IMR-90 (cell line): ENCODE measurements at regions of chr9 and their contacts with region 1.

Region 1: DNA sequence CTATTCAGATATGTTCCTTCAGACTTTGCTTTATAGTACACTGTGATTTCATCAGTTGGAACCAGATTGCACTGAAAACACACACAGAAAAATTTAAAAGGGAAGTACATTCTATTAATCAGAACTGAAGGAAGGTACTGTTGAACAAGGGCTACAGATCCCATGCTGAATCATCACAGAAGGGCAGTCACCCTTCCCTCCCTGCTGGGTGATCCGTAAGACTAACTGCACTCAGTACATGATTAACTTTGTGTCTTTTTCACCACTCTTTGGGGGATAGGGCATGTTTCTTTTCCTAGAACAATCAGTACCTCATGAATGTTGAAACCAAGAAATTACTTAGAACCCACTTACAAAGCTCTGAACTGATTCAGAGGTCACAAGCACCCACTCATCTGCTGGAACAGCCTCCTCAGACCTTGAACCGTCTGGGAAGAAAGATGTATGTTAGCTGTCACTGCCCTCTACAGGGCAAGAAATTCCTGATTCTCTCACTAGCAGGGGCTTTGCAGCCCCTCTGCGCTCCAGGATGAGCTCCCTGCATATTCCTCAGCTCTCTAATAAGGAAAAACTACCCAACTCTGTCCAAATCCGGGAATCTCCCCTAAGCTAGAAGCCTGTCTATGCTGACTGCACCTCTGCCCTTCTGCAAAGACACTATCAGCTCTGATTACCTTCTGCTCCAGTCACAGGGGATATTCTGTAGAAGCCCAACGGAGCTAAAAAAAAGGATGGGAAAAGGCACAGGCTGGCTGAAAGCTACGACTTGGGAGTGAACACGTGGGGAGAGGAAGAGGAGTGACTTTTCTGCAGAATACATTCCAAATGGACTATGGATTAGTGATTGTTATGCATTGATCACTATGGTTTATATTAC is 51.0 kb downstream of the IARS1 start:
- DNase-seq: peak; percentile 87
- ATAC-seq: peak; percentile 45
- H3K4me3 ChIP-seq: no peak overlapping the region
- H3K27ac ChIP-seq: peak overlapping the region; percentile 99
- H3K4me1 ChIP-seq: peaks cover 36% of the 10 kb centered on the region
- H3K27me3 ChIP-seq: no peaks in the 10 kb centered on the region
- CTCF ChIP-seq: peak; percentile 56
- POLR2A ChIP-seq: peak; percentile 31; the same call in 1 of the 2 replicates
- RAD21 ChIP-seq: peak; percentile 56

Region 2: DNA sequence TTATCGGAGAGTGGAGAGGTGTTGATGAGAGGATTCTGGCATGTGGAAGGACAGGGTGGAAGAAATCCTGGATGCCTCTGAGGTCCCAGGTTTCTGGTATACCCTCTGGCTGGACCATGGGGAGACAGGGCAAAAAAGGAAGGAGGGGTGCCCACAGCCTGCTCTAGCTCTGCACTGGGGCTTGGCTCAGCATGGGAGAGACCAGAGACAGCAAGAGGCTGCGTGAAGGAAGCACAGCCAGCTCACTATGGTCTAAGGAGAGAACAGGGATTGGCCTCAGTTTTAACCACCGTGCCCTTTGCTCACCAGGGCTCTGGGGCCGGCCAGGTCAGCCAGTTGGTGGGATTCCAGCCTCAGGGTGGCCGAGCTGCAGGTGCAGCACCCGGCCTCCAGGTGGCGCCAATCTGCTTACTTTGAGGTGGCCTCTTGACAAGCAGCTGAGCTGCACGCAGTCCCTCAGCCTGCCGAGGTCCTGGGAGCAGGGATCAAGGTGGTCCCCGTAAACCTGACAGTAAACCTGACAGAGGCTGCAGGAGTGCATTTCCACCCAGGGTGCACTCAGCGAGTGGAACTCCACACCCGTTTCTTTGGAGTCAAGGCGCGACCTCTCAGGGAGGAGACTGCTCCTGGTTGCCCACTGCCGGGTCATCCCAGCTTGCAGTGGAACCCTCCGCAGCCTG is 102.3 kb before region 1 on chr9:
- CTCF ChIA-PET with region 1: interaction called, 74 read pairs
- POLR2A ChIA-PET with region 1: interaction called, 4 read pairs
- dilution Hi-C with region 1: no loop called
- in situ Hi-C with region 1: loop called (anchors 5 kb)
- intact Hi-C with region 1: loop called (anchors 1 kb)
- DNase-seq: peak; percentile 65
- ATAC-seq: peak; percentile 55
- H3K4me3 ChIP-seq: peak overlapping the region; percentile 65
- H3K27ac ChIP-seq: peak overlapping the region; percentile 92
- H3K4me1 ChIP-seq: peaks cover 35% of the 10 kb centered on the region
- H3K27me3 ChIP-seq: no peaks in the 10 kb centered on the region
- CTCF ChIP-seq: peak; percentile 92
- POLR2A ChIP-seq: no peak
- RAD21 ChIP-seq: peak; percentile 86

Region 3: DNA sequence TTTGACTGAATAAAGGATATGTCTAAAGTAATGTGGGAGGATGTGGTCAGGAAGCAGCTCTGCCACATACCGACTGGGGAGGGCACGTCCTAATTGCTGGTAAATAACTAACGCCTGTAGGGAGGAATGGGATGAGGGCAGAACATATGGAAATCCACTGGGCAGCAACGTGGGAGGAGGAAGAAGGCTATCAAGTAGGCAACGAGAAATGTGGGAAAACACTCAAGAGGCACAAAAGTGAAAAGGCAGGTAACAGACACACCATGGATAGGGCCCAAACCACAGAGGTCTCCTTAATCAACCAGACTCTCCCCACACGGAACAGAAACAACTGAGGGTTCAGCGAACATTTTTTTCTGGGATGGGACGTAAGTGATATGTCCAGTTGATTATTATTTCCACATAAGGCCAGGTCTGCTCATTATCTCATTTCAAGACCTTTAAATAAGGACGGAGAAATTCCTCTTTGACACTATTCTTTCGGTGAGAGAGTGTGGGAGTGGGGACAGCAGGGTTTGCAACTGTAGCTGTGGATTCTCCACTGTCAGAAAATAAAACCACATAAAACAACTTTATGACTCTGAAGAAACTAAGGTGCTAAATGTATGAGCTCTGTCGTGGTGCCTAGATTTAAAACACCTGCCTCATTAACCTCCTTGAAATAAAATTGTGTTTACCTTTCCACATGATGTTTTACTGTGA is 34.0 kb after region 1 on chr9:
- CTCF ChIA-PET with region 1: interaction called, 3 read pairs
- POLR2A ChIA-PET with region 1: no interaction called
- dilution Hi-C with region 1: no loop called
- in situ Hi-C with region 1: no loop called
- intact Hi-C with region 1: loop called (anchors 5 kb)
- DNase-seq: no peak
- ATAC-seq: no peak
- H3K4me3 ChIP-seq: no peak overlapping the region
- H3K27ac ChIP-seq: no peak overlapping the region
- H3K4me1 ChIP-seq: peaks cover 2% of the 10 kb centered on the region
- H3K27me3 ChIP-seq: no peaks in the 10 kb centered on the region
- CTCF ChIP-seq: no peak
- POLR2A ChIP-seq: no peak
- RAD21 ChIP-seq: no peak

Region 4: DNA sequence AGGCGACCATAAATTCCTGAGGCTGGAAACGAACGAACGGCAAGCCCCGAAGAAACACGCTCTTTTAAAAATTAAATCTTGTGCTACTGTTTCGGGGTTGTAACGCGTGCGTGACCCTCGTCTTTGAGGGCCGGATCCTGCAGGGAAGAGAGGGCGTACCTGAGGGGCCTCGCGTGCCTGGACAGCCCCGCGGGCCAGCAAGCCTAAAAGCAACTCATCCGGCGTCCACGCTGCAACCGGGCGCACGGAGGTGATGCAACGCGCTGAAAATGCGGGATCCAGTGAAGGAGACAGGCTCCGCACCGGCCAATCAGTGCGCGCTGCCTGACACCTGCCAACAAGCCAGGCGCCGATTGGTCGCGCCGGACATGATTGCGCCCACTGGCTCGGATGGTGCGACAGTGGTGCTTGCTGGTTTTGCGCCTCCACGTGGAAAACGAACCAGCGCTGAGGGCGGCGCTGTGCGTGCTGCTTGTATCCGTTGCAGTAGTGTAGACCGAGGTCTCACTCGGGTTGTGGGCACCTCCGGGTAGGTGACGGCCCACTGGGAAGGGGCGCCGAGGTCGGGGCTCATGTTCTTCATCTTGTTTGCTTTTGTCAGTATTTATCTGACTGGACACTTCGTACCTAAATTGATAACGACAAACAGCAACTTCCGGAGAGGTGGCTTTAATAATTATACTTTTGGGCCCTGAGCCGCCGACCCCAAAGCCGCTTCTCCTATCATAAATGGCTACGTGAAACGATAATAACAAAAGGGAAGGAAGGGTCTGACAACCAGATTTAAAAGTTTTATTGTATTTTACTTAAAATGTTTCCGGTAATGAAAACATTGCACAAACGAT is 51.2 kb after region 1 on chr9 and contains the start of gene IARS1:
- CTCF ChIA-PET with region 1: no interaction called
- POLR2A ChIA-PET with region 1: interaction called, 3 read pairs
- dilution Hi-C with region 1: no loop called
- in situ Hi-C with region 1: loop called (anchors 5 kb)
- intact Hi-C with region 1: no loop called
- DNase-seq: peak; percentile 98
- ATAC-seq: peak; percentile 91
- H3K4me3 ChIP-seq: peak within 1 kb of the TSS; percentile 61
- H3K27ac ChIP-seq: peak within 1 kb of the TSS; percentile 85
- H3K4me1 ChIP-seq: peaks cover 6% of the 10 kb centered on the region
- H3K27me3 ChIP-seq: no peaks in the 10 kb centered on the region
- CTCF ChIP-seq: peak; percentile 44
- POLR2A ChIP-seq: peak; percentile 83
- RAD21 ChIP-seq: no peak
- total RNA-seq, gene IARS1: 383 and 414 TPM in 2 replicates